ENCODE measurements at regions of chr15 and their contacts with region 1.

Region 1: DNA sequence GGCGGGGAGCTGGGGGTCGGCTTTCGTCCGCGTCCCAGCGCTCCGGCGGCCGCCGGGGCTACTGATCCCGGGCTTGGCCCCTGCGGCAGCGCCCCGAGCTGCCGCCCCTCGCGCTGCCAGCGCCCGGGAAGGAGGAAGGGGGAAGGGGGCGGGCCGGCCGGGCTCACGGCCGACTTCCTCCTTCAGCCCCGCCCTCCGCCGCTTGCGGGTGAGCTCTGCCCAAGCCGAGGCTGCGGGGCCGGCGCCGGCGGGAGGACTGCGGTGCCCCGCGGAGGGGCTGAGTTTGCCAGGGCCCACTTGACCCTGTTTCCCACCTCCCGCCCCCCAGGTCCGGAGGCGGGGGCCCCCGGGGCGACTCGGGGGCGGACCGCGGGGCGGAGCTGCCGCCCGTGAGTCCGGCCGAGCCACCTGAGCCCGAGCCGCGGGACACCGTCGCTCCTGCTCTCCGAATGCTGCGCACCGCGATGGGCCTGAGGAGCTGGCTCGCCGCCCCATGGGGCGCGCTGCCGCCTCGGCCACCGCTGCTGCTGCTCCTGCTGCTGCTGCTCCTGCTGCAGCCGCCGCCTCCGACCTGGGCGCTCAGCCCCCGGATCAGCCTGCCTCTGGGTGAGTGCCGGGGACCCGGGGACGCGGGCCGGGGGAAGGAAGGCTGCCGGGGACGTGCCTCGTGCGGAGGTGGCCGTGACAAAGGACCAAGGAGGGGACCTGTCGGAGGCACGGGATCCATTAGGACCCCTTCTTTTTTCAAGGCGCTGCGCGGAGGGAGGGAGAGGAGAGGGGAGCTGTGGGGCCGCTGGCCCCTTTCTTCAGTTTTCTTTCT is at the start of gene SEMA4B:
- DNase-seq: peak; percentile 70 to 78 (median 73)
- H3K4me3 ChIP-seq: peak within 1 kb of the TSS; percentile 17 to 79
- H3K4me3 Mint-ChIP-seq: peak within 1 kb of the TSS; percentile 81 to 91 (median 90)
- H3K27ac ChIP-seq: peak within 1 kb of the TSS; percentile 74
- H3K27ac Mint-ChIP-seq: peak within 1 kb of the TSS; percentile 41 to 91 (median 80)
- H3K4me1 ChIP-seq: peaks cover 24% of the 10 kb centered on the region
- H3K4me1 Mint-ChIP-seq: peaks cover 14 to 35% (median 25%) of the 10 kb centered on the region in 4 donors
- H3K27me3 ChIP-seq: no peaks in the 10 kb centered on the region
- H3K27me3 Mint-ChIP-seq: no peaks in the 10 kb centered on the region
- total RNA-seq, gene SEMA4B: 18.9 to 23.0 TPM

Region 2: GRCh38 chr15:90184786-90185569 is 16.4 kb before region 1 on chr15:
- CTCF ChIA-PET with region 1: interaction called, 3 read pairs
- POLR2A ChIA-PET with region 1: interaction called, 45 read pairs
- intact Hi-C with region 1: loop called (anchors 2 kb)
- DNase-seq: peak; percentile 56 to 71 (median 65)
- H3K4me3 ChIP-seq: peak overlapping the region; percentile 6 to 63
- H3K4me3 Mint-ChIP-seq: peak overlapping the region; percentile 81 to 92 (median 88)
- H3K27ac ChIP-seq: peak overlapping the region; percentile 51
- H3K27ac Mint-ChIP-seq: peak overlapping the region; percentile 4 to 86 (median 81)
- H3K4me1 ChIP-seq: peaks cover 17% of the 10 kb centered on the region
- H3K4me1 Mint-ChIP-seq: peaks cover 10 to 18% (median 14%) of the 10 kb centered on the region in 4 donors
- H3K27me3 ChIP-seq: no peaks in the 10 kb centered on the region
- H3K27me3 Mint-ChIP-seq: no peaks in the 10 kb centered on the region

Region 3: GRCh38 chr15:90214553-90215196 is 13.3 kb after region 1 on chr15:
- CTCF ChIA-PET with region 1: interaction called, 15 read pairs
- POLR2A ChIA-PET with region 1: interaction called, 11 read pairs
- intact Hi-C with region 1: no loop called
- DNase-seq: no peak
- H3K4me3 ChIP-seq: no peak overlapping the region
- H3K4me3 Mint-ChIP-seq: no peak overlapping the region
- H3K27ac ChIP-seq: no peak overlapping the region
- H3K27ac Mint-ChIP-seq: peak overlapping the region in 1 of 7 donors; percentile 60
- H3K4me1 ChIP-seq: peaks cover 18% of the 10 kb centered on the region
- H3K4me1 Mint-ChIP-seq: peaks cover 24 to 37% (median 32%) of the 10 kb centered on the region in 4 donors
- H3K27me3 ChIP-seq: no peaks in the 10 kb centered on the region
- H3K27me3 Mint-ChIP-seq: no peaks in the 10 kb centered on the region

Region 4: DNA sequence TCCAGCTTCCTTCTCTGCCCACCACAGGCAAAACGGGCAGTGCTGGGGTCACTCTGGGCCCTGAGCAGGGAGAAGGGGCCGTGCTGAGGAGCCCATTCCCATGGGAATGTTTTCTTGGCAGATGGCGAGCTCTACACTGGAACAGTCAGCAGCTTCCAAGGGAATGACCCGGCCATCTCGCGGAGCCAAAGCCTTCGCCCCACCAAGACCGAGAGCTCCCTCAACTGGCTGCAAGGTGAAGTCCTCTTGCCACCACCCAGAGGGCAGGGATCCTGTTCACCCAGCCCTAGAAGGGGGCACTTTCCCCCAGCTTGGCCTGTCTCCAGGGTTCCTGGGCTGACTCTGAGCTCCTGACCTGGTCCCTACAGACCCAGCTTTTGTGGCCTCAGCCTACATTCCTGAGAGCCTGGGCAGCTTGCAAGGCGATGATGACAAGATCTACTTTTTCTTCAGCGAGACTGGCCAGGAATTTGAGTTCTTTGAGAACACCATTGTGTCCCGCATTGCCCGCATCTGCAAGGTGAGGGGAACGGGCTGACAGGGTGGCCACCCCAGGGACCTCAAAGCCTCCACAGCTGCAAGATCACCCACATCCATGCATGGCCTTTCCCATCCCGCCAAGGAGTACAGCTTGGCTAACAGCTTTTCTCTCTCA is 20.0 kb after region 1 on chr15:
- CTCF ChIA-PET with region 1: interaction called, 15 read pairs
- POLR2A ChIA-PET with region 1: interaction called, 3 read pairs
- intact Hi-C with region 1: no loop called
- DNase-seq: no peak
- H3K4me3 ChIP-seq: no peak overlapping the region
- H3K4me3 Mint-ChIP-seq: no peak overlapping the region
- H3K27ac ChIP-seq: no peak overlapping the region
- H3K27ac Mint-ChIP-seq: no peak overlapping the region
- H3K4me1 ChIP-seq: no peaks in the 10 kb centered on the region
- H3K4me1 Mint-ChIP-seq: peaks cover 6 to 13% (median 8%) of the 10 kb centered on the region in 4 donors
- H3K27me3 ChIP-seq: no peaks in the 10 kb centered on the region
- H3K27me3 Mint-ChIP-seq: no peaks in the 10 kb centered on the region

Region 5: GRCh38 chr15:90265271-90266060 is 64.1 kb after region 1 on chr15 and contains the start of gene NGRN:
- CTCF ChIA-PET with region 1: interaction called, 3 read pairs
- POLR2A ChIA-PET with region 1: interaction called, 26 read pairs
- intact Hi-C with region 1: loop called (anchors 1 kb)
- DNase-seq: peak; percentile 92 to 95 (median 94)
- H3K4me3 ChIP-seq: peak within 1 kb of the TSS; percentile 66 to 97
- H3K4me3 Mint-ChIP-seq: peak within 1 kb of the TSS; percentile 93 to 99 (median 98)
- H3K27ac ChIP-seq: peak within 1 kb of the TSS; percentile 95
- H3K27ac Mint-ChIP-seq: peak within 1 kb of the TSS; percentile 98 to 100 (median 99)
- H3K4me1 ChIP-seq: peaks cover 44% of the 10 kb centered on the region
- H3K4me1 Mint-ChIP-seq: peaks cover 26 to 62% (median 42%) of the 10 kb centered on the region in 4 donors
- H3K27me3 ChIP-seq: no peaks in the 10 kb centered on the region
- H3K27me3 Mint-ChIP-seq: no peaks in the 10 kb centered on the region
- total RNA-seq, gene NGRN: 53.7 to 59.2 TPM

Region 6: DNA sequence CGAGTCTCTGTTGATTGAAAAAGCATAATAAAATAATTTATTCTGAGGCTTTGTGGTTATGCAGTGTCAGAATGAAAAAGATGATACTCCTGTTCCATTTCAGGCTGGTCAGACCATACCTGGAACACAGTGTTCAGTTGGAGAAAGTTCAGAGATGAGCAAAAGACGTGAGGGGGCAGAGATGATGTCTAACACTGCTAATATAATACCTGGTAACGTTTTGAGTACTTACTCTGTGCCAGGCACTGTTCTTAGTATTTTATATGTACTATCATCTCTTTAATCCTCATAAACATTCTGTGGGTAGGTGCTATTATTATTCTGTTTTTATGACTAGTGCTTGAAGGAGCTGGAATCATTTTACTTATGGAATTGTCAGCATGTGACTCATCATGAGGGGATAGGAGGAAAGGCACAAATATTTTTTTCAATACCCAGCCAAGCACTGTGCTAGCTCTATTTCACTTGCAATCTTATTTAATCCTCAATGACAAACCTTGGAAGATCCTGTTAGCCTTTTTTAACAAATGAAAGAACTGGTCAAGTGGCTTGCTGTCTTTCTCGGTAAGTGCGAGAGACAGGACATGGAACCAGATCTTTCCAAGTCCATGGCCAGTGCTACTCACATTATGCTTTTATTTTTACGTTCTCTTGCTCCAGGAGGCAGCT is 218.5 kb after region 1 on chr15:
- CTCF ChIA-PET with region 1: no interaction called
- POLR2A ChIA-PET with region 1: no interaction called
- intact Hi-C with region 1: no loop called
- DNase-seq: no peak
- H3K4me3 ChIP-seq: no peak overlapping the region
- H3K4me3 Mint-ChIP-seq: peak overlapping the region in 6 of 8 donors; percentile 1 to 64 (median 60)
- H3K27ac ChIP-seq: no peak overlapping the region
- H3K27ac Mint-ChIP-seq: peak overlapping the region in 6 of 7 donors; percentile 49 to 79 (median 70)
- H3K4me1 ChIP-seq: peaks cover 60% of the 10 kb centered on the region
- H3K4me1 Mint-ChIP-seq: peaks cover 44 to 83% (median 62%) of the 10 kb centered on the region in 4 donors
- H3K27me3 ChIP-seq: no peaks in the 10 kb centered on the region
- H3K27me3 Mint-ChIP-seq: no peaks in the 10 kb centered on the region